Activated CD8-positive, alpha-beta T cell treated with anti-CD3 and anti-CD28 coated beads for 36 hours (primary cell): ENCODE measurements at regions of chr2 and their contacts with region 1.

Region 1: DNA sequence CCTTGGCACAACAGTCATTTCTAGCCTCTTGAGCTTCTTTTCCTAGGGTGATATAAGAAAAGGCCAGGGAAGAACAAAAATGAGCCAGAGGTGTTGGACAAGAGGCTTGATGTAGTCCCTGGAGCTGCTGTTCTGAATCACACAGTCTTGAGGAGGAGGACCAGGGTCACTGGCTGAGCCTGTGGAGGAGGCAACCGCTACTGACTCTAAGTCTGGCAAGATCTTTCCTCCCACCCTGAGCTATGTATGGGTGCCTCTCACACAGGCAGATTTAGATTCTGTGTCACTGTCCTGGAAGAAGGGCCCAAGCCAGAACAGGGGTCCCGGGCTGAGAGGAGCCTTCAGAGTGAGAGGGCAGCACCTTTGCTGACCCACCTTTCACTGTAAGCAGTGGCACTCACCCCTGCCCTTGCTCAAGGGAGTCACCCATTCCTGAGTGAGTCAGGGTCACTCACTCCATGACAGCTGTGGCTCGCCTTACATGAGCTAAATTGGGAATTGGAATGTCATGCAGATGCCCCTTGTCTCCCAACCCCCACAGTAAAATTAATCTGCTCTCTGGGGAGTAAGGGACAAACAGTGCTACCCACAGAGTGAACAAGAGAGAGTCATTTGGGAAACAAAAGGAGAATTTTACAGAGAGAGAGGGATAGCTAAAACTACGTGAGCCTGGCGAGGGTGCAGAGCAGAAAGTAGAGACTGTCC is at the start of gene TRIM54:
- DNase-seq: no peak
- ATAC-seq: no peak
- H3K4me3 Mint-ChIP-seq: no peak within 1 kb of the TSS
- H3K27ac Mint-ChIP-seq: no peak within 1 kb of the TSS
- H3K4me1 Mint-ChIP-seq: peaks cover 6% of the 10 kb centered on the region
- H3K27me3 Mint-ChIP-seq: peaks cover 8% of the 10 kb centered on the region
- CTCF ChIP-seq: no peak
- total RNA-seq, gene TRIM54: 0.16 to 0.23 TPM

Region 2: GRCh38 chr2:26542194-26542455 is 739.9 kb before region 1 on chr2:
- CTCF ChIA-PET with region 1: no interaction called
- POLR2A ChIA-PET with region 1: no interaction called
- intact Hi-C with region 1: no loop called
- DNase-seq: no peak
- ATAC-seq: no peak
- H3K4me3 Mint-ChIP-seq: no peak overlapping the region
- H3K27ac Mint-ChIP-seq: no peak overlapping the region
- H3K4me1 Mint-ChIP-seq: no peaks in the 10 kb centered on the region
- H3K27me3 Mint-ChIP-seq: no peaks in the 10 kb centered on the region
- CTCF ChIP-seq: no peak

Region 3: GRCh38 chr2:26959331-26959730 is 322.7 kb before region 1 on chr2:
- CTCF ChIA-PET with region 1: interaction called, 27 read pairs
- POLR2A ChIA-PET with region 1: no interaction called
- intact Hi-C with region 1: loop called (anchors 5 kb)
- DNase-seq: no peak
- ATAC-seq: no peak
- H3K4me3 Mint-ChIP-seq: no peak overlapping the region
- H3K27ac Mint-ChIP-seq: no peak overlapping the region
- H3K4me1 Mint-ChIP-seq: no peaks in the 10 kb centered on the region
- H3K27me3 Mint-ChIP-seq: peaks cover 18% of the 10 kb centered on the region
- CTCF ChIP-seq: no peak

Region 4: GRCh38 chr2:27095745-27096651 is 186.0 kb before region 1 on chr2:
- CTCF ChIA-PET with region 1: interaction called, 28 read pairs
- POLR2A ChIA-PET with region 1: no interaction called
- intact Hi-C with region 1: loop called (anchors 5 kb)
- DNase-seq: peak; percentile 65
- ATAC-seq: peak; percentile 94
- H3K4me3 Mint-ChIP-seq: peak overlapping the region; percentile 30
- H3K27ac Mint-ChIP-seq: no peak overlapping the region
- H3K4me1 Mint-ChIP-seq: no peaks in the 10 kb centered on the region
- H3K27me3 Mint-ChIP-seq: no peaks in the 10 kb centered on the region
- CTCF ChIP-seq: no peak

Region 5: DNA sequence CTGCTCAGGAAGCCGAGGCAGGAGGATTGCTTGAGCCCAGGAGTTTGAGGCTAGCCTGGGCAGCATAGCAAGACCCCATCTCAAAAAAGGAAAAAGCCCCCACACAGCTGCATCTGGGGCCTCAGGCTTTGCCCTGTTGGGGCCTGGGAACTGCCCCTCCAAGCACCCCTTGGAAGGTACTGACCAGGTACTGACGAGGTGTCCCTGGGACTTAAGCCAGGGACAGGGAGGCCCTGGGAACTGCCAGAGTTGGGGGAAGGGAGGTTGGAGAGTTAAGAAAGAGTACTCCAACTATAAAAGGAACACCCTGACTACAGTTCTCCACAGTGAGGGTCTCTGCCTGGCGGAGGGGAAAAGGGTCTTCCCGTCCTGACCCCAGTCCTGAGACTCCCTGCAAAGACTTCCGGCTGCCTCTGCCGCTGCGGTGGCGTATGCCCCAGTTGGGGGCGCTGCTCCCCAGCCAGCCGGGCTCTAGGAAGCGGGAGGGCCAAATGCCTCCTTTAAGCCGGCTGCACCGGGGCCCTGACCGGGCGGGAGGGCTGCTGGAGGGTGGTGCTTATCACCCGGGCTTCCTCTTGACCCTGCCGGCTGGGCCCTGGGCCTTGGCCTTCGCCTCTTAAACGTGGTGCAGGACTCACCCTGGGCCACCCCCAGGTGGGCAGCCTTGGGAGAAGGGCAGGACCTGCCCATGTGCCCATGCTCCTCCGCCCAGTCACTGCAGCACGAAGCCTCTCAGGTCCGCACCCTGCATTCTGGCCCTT is 31.9 kb before region 1 on chr2:
- CTCF ChIA-PET with region 1: interaction called, 122 read pairs
- POLR2A ChIA-PET with region 1: interaction called, 5 read pairs
- intact Hi-C with region 1: loop called (anchors 2 kb)
- DNase-seq: peak; percentile 77
- ATAC-seq: peak; percentile 94
- H3K4me3 Mint-ChIP-seq: no peak overlapping the region
- H3K27ac Mint-ChIP-seq: no peak overlapping the region
- H3K4me1 Mint-ChIP-seq: no peaks in the 10 kb centered on the region
- H3K27me3 Mint-ChIP-seq: peaks cover 9% of the 10 kb centered on the region
- CTCF ChIP-seq: peak; percentile 91

Region 6: DNA sequence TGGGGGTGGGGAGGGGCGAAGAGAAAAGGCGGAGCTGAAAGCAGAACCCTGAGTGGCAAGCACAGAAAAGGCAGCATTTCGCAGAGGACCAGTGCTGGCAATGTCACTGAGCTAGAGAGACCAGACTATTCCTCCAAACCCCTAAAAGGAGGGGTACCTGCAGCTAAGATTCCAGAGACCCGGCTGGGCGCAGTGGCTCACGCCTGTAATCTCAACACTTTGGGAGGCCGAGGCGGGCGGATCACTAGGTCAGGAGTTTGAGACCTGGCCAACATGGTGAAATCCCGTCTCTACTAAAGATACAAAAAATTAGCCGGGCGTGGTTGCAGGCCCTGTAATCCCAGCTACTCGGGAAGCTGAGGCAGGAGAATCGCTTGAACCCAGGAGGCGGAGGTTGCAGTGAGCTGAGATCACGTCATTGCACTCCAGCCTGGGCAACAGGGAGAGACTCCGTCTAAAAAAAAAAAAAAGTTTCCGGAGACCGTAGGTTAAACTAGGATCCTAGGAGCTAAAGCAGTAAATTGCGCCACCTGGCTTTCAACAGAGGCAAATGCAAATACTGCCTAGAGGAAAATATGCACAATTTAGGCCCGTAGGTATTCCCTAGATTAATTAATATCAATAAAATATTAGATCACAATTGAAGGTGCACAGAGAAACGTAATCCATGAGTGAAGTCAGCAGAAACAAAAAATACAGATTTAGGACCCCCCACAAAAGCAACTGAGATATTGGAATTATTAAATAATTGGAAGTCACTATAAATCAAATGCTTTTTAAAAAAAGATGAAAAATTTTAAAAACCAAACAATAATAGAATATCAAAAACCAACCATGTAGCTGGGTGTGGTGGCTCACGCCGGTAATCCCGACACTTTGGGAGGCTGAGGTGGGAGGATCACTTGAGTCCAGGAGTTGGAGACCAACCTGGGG is 21.4 kb after region 1 on chr2:
- CTCF ChIA-PET with region 1: interaction called, 100 read pairs
- POLR2A ChIA-PET with region 1: interaction called, 3 read pairs
- intact Hi-C with region 1: no loop called
- DNase-seq: peak; percentile 59
- ATAC-seq: peak; percentile 80
- H3K4me3 Mint-ChIP-seq: peak overlapping the region; percentile 61
- H3K27ac Mint-ChIP-seq: no peak overlapping the region
- H3K4me1 Mint-ChIP-seq: peaks cover 3% of the 10 kb centered on the region
- H3K27me3 Mint-ChIP-seq: peaks cover 18% of the 10 kb centered on the region
- CTCF ChIP-seq: peak; percentile 88